Naive thymus-derived CD4-positive, alpha-beta T cell (primary cell): ENCODE measurements at regions of chr7 and their contacts with region 1.

Region 1: DNA sequence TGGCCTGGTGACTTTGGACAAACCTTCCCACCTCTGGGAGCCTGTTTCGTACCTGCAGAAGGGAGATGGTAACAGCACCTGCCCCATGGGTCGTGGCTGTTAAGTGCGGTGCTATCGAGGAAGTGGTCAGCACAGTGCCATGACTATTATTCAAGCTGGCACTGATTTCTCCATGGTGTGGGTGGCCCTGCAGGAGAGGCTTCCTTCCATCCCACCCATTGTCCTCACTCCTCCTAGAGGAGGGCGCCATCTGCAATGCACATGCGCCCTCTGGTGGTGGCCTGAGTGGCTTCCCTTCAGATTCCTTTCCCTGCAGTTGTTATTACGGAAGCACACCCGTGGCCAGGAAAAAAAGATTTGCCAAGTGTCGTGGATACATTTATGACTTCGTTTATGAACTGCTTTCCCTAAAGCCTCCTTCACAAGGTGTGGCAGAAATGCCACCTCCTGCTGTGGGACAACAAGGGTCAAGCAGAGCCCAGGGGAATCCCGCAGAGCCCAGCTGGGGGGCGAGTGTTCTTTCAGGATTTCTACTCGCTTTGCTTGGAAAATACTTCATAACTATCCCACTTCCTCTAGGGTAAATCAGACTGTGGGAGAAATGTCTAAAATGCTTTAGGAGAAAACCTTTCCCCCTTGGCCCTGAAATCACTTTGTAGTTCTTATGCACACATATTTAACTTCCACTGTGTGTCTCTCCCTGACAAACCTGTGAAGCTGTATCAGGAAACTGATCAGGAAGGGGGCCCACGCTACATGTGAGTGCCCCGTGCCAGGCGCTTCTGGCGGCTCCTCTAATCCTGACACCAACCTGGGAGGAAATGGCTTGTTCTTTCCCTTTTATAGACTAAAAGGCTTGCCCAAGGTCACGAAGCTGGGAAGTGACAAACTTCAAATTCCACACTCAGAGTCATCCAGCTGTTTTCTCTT is 98.0 kb upstream of the ANLN start:
- DNase-seq: peak; percentile 37 to 78 (median 68)
- ATAC-seq: peak; percentile 76
- H3K4me3 ChIP-seq: peak overlapping the region; percentile 38
- H3K4me3 Mint-ChIP-seq: peak overlapping the region; percentile 54 to 83 (median 73)
- H3K27ac ChIP-seq: no peak overlapping the region
- H3K27ac Mint-ChIP-seq: peak overlapping the region in 8 of 9 donors; percentile 3 to 83 (median 50)
- H3K4me1 ChIP-seq: peaks cover 26% of the 10 kb centered on the region in 2 donors
- H3K4me1 Mint-ChIP-seq: peaks cover 29 to 47% (median 40%) of the 10 kb centered on the region in 7 donors
- H3K27me3 ChIP-seq: no peaks in the 10 kb centered on the region
- H3K27me3 Mint-ChIP-seq: no peaks in the 10 kb centered on the region

Region 2: GRCh38 chr7:35985126-35985754 is 306.4 kb before region 1 on chr7:
- CTCF ChIA-PET with region 1: interaction called, 139 read pairs
- POLR2A ChIA-PET with region 1: interaction called, 4 read pairs
- intact Hi-C with region 1: loop called (anchors 1 kb)
- DNase-seq: peak; percentile 56 to 81 (median 74)
- ATAC-seq: peak; percentile 97
- H3K4me3 ChIP-seq: no peak overlapping the region
- H3K4me3 Mint-ChIP-seq: no peak overlapping the region
- H3K27ac ChIP-seq: no peak overlapping the region
- H3K27ac Mint-ChIP-seq: peak overlapping the region in 1 of 9 donors; percentile 40
- H3K4me1 ChIP-seq: no peaks in the 10 kb centered on the region
- H3K4me1 Mint-ChIP-seq: no peaks in the 10 kb centered on the region
- H3K27me3 ChIP-seq: no peaks in the 10 kb centered on the region
- H3K27me3 Mint-ChIP-seq: peaks cover 0 to 4% (median 0%) of the 10 kb centered on the region in 5 donors

Region 3: DNA sequence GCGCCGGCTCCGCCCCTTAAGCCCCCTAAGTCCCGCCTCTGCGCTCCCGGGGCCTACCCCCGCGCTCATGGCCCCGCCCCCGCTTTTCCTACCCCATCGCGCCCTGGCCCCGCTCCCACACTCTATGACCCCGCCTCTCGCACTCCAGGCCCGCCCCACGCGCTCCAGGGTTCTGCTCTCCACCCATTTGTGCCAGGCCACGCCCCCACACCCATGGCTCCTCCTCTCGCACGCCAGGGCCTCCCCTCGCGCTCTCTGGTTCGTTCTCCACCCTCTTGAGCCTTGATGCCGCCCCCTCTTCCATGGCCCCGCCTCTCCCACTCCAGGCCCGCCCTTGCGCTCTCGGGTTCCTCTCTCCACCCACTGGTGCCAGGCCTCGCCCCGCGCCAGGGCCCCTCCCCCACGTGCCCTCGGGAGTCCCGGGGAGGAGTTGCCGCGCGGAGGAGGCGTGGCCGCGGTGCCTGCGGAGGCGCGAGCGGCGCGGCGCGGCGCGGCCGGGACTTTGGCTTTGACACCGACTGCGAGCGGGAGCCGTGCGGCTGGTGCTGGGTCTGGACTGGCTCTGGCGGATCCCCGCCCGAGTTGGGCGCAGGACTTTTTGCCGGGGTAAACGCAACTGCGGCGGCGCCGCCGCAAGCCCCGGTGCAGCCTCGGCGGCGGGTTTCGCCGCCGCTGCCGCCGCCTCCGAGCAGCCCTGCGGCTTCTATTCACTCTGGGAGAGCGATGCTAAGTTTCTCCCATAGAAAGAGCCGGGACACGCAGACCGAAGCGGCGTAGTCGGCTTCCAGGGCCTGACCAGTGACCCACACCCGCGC is 138.7 kb before region 1 on chr7 and contains the start of gene EEPD1:
- CTCF ChIA-PET with region 1: no interaction called
- POLR2A ChIA-PET with region 1: no interaction called
- intact Hi-C with region 1: loop called (anchors 1 kb)
- DNase-seq: peak; percentile 99 to 100 (median 100)
- ATAC-seq: peak; percentile 96
- H3K4me3 ChIP-seq: peak within 1 kb of the TSS; percentile 72
- H3K4me3 Mint-ChIP-seq: peak within 1 kb of the TSS; percentile 70 to 93 (median 84)
- H3K27ac ChIP-seq: peak within 1 kb of the TSS; percentile 73
- H3K27ac Mint-ChIP-seq: peak within 1 kb of the TSS in 8 of 9 donors; percentile 10 to 87 (median 74)
- H3K4me1 ChIP-seq: peaks cover 7 to 16% of the 10 kb centered on the region in 2 donors
- H3K4me1 Mint-ChIP-seq: peaks cover 12 to 31% (median 24%) of the 10 kb centered on the region in 7 donors
- H3K27me3 ChIP-seq: no peaks in the 10 kb centered on the region
- H3K27me3 Mint-ChIP-seq: peaks cover 0 to 21% (median 0%) of the 10 kb centered on the region in 5 donors
- total RNA-seq, gene EEPD1: 2.2 to 13.2 (median 3.7) TPM

Region 4: GRCh38 chr7:36315309-36316133 is 23.9 kb after region 1 on chr7:
- CTCF ChIA-PET with region 1: interaction called, 6 read pairs
- POLR2A ChIA-PET with region 1: no interaction called
- intact Hi-C with region 1: loop called (anchors 1 to 2 kb)
- DNase-seq: no peak
- ATAC-seq: no peak
- H3K4me3 ChIP-seq: no peak overlapping the region
- H3K4me3 Mint-ChIP-seq: no peak overlapping the region
- H3K27ac ChIP-seq: no peak overlapping the region
- H3K27ac Mint-ChIP-seq: no peak overlapping the region
- H3K4me1 ChIP-seq: no peaks in the 10 kb centered on the region
- H3K4me1 Mint-ChIP-seq: peaks cover 0 to 5% (median 3%) of the 10 kb centered on the region in 7 donors
- H3K27me3 ChIP-seq: no peaks in the 10 kb centered on the region
- H3K27me3 Mint-ChIP-seq: peaks cover 0 to 2% (median 0%) of the 10 kb centered on the region in 5 donors